ENCODE measurements at regions of chr2 and their contacts with region 1.

Region 1: GRCh38 chr2:235116885-235117492 is 165.2 kb downstream of the SH3BP4 start:
- DNase-seq: peak; percentile 50
- ATAC-seq: no peak
- H3K4me3 ChIP-seq: no peak overlapping the region
- H3K27ac ChIP-seq: no peak overlapping the region
- H3K4me1 ChIP-seq: no peaks in the 10 kb centered on the region
- H3K27me3 ChIP-seq: peaks cover 0 to 11% of the 10 kb centered on the region in 2 experiments; a peak in 2 of 5 replicates
- CTCF ChIP-seq: peak; percentile 63
- EP300 ChIP-seq: no peak
- POLR2A ChIP-seq: no peak
- RAD21 ChIP-seq: peak; percentile 68

Region 2: DNA sequence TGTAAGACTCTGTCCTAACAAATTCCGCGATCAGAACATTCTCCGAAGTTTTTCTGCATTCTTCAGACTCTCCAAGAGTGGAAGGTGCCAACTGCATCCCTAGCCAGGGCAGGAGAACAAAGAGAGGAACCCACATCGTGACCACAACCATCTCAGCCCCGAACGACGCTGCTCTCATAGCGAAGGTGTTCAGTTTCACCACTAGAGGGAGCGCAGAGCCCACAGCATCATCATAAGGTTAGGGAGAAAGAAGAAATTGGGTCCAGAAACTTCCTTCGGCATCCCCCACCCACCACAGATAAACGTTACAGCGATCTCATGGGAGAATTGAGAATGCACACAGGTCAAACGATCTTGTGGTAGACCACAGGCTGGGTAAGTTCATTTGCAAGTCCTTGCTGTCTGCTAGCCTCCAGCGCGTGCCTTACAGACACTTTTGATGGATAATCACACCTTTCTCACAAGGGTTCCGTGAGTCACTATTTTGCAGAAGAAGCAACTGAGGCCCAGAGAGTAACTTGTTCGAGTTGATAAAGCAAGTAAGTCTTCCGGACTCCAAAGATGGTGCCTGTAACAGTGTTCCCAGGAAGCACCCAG is 566.4 kb before region 1 on chr2:
- CTCF ChIA-PET with region 1: interaction called, 19 read pairs
- POLR2A ChIA-PET with region 1: no interaction called
- in situ Hi-C with region 1: no loop called
- intact Hi-C with region 1: loop called (anchors 1 kb)
- DNase-seq: peak; percentile 73
- ATAC-seq: peak; percentile 88
- H3K4me3 ChIP-seq: no peak overlapping the region
- H3K27ac ChIP-seq: no peak overlapping the region
- H3K4me1 ChIP-seq: peaks cover 33% of the 10 kb centered on the region
- H3K27me3 ChIP-seq: peaks cover 2 to 33% of the 10 kb centered on the region in 2 experiments; a peak in 4 of 5 replicates
- CTCF ChIP-seq: peak; percentile 99
- EP300 ChIP-seq: no peak
- POLR2A ChIP-seq: no peak
- RAD21 ChIP-seq: peak; percentile 97

Measured in HepG2 (cell line).